ENCODE measurements at regions of chr14 and their contacts with region 1.

Region 1: DNA sequence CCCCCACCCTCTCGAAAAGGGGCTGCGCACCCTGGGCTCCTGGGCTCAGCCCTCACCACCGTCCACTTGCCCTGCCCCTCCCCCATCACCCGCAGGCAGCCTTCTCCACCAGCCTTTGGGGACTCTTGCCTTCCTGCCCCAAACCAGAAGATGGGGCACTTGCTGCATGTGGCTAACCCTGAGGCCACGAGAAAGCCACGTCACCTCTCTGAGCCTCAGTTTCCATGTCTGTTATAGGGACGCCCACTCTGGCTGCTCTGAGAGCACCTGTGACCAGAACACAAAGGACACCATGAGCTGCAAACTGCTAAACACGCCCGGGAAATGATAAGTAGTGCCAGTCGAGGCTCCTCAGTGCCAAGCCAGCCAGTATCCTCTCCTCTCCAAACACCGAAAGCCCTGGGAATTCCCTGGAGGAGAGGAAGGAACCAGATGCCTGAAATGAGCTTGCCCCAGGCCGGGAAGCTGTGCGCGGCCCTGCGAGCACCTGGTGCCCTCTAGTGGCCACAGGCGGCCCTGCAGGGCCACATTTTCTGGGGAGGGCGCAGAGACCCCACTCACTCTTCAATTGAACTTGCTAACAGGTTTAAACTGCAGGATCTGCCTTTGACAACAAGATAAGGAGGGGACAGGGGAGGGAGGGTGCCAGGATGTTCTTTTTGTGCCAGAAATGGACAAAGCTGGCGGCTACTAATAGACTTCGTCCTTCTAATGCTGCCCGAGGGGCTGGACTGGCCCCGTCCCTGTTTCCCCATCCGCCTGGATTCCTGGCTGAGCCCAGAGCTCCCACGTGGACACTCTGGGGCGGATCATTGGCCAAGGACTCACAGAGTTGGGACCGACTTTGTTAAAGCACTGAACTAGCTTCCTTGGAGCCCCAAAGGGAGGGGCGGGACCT is 10.2 kb upstream of the SERPINA9 start:
- DNase-seq: peak in 9 of 10 donors; percentile 27 to 93 (median 63)

Region 2: DNA sequence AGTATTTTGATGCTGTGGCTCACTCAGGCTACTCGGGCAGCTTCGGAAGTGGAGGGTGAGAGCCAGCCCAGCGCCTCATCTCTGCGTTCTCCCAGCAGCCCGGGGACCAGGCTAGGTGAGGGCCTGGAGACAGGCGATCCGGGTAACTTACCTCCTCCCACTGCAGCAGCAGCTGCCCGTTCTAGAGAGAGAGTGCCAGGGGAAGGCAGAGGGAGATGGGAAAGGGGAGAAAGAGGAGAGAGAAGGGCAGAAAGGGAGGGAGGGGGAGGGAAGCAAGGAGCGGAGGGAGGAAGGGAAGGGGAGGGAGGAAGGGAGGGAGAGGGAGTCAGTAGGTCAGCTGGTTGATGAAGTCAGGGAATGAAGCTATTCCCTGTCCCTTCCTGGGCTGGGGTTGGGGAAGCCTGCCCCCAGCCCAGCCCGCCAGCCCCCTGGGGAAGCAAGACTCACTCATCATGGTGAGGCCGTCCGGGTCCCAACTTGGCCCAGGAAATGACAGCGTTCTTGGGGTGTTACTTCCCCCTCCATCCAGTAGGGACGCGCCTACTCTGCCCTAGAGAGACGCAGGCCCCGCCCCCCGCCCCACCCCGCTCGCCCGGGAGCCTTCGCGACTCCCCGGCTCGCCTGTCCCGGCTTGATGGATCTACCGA is 357.0 kb before region 1 on chr14 and contains the start of gene IFI27L2:
- intact Hi-C with region 1: loop called (anchors 2 kb)
- DNase-seq: peak; percentile 57 to 94 (median 72)

Region 3: DNA sequence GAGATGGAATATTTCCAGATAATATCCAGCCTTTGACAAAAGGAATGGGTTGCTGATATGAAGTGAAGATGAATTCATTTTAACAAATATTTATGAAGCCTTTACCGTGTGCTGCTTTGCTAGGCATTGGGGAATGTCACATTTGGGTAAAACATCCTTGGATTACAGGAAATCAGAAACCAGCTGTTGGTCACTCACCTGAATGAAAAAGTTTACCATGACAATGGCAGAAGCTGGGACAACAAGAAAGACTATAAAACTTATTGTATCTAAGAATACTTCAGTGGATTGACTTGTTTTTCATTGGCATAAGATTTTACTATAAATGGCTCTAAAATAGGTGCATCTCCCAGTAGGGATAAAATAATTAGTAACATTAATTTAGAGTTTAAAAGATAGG is 292.4 kb before region 1 on chr14:
- intact Hi-C with region 1: no loop called
- DNase-seq: no peak

Region 4: DNA sequence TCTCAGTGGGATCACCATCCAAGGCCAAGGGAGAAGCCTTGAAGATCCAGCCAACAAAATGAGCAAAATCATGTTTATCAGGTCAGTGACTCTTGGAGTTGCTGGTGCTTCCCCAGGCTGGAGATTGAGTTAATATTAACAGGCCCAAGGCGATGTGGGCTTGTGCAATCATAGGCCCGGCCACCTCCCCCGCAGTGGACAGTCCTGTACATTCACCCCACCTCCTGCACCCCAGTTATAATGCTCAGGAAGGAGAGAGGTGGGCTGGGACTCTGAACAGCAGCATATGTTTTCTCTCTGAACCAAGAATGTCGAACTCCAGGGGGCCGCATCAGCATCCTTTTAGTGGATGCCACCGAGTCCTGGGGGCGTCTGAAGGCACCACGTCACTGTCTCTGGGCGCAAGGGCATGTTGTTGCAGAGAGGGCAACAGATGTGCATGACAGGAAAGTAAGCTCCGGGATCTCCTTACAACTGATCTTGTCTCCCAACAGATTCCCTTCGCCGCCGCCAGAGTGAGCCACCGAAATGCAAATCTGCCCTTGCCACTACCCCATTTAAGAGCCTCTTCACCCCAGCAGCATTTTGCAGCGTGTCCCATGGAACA is 130.9 kb before region 1 on chr14:
- intact Hi-C with region 1: loop called (anchors 2 kb)
- DNase-seq: peak in 9 of 10 donors; percentile 33 to 94 (median 53)

Region 5: GRCh38 chr14:94423453-94424056 is 62.6 kb before region 1 on chr14:
- intact Hi-C with region 1: loop called (anchors 5 kb)
- DNase-seq: peak; percentile 18 to 95 (median 74)